A673 (cell line): ENCODE measurements at regions of chr5 and their contacts with region 1.

Region 1: DNA sequence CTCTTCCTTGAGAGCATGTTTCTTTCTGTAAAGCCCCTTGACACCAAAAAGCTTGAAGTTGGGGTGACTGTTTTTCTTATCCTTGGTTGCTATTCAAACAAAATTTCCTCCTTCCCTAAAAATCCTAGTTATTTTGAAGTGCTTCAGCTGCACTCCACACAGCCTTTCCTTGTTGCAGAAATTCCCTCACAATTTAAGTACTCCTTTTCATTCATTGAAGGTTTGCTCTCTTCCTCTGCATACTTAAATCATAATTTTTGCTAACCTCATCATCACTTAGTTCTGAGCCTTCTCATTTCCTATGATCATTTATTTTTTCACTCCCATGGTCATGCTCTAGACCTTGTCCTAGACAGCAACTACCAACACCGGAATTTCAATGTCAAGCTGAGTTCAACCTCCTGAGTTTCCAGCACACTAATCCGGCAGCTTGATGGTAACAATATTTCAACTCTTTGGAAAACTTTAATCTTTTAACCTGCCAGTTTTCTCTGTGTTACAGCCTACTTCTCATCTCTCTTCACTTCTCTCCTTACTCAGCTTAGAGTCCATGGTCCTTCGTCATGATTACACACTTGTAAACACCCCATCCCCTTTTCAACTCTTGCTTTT is 78.7 kb upstream of the ACTBL2 start:
- DNase-seq: no peak
- H3K4me3 ChIP-seq: no peak overlapping the region
- H3K27ac ChIP-seq: no peak overlapping the region
- H3K4me1 ChIP-seq: no peaks in the 10 kb centered on the region
- H3K27me3 ChIP-seq: peaks cover 19% of the 10 kb centered on the region
- CTCF ChIP-seq: no peak

Region 2: DNA sequence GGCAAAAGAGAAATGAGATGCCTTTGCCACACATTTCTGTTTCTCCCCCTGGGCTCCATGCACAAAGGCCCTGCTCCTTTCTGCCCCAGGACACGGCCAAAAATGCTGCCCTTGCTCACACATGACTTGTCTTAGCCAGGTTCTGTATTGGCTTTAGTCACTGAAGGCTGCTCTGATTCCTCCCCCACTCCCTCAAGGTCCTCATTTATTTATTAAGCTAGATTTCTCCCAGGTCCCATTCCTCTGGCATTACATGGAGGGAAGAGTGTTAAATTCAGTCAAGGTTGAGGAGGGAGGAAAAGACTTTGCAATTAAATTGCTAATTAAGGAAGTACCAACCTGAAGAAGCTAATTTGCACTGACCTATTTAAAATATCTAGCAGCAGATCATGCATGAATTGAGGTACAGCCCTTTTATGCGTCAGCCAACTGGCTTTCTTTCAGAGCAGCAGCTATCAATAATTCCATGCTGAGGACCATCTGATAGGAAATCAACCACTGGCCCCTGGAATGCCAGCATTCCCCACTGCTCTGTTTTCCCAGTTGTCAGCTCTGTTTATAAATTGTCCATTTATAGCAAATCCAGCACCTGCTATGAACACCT is 827.1 kb before region 1 on chr5:
- CTCF ChIA-PET with region 1: no interaction called
- POLR2A ChIA-PET with region 1: no interaction called
- intact Hi-C with region 1: no loop called
- DNase-seq: no peak
- H3K4me3 ChIP-seq: no peak overlapping the region
- H3K27ac ChIP-seq: no peak overlapping the region
- H3K4me1 ChIP-seq: no peaks in the 10 kb centered on the region
- H3K27me3 ChIP-seq: no peaks in the 10 kb centered on the region
- CTCF ChIP-seq: no peak

Region 3: DNA sequence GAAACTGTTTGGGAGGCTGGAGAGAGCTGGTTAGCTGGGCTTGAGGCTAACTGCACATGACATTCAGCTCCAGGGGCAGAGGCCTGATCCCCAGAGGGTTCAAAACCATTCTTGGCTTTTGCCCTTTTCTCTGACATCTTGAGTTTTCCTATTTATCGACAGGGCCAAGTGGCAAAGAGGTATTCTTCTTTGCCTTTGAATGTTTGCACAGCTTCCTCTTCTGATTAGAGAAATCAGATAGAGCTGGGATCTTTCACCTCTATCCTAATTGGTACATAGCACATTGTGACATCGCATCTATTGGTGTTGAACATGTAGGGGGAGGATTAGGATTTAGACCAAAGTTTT is 222.5 kb before region 1 on chr5:
- CTCF ChIA-PET with region 1: interaction called, 13 read pairs
- POLR2A ChIA-PET with region 1: no interaction called
- intact Hi-C with region 1: no loop called
- DNase-seq: no peak
- H3K4me3 ChIP-seq: no peak overlapping the region
- H3K27ac ChIP-seq: no peak overlapping the region
- H3K4me1 ChIP-seq: no peaks in the 10 kb centered on the region
- H3K27me3 ChIP-seq: no peaks in the 10 kb centered on the region
- CTCF ChIP-seq: no peak

Region 4: GRCh38 chr5:57450991-57451876 is 110.1 kb before region 1 on chr5:
- CTCF ChIA-PET with region 1: no interaction called
- POLR2A ChIA-PET with region 1: no interaction called
- intact Hi-C with region 1: no loop called
- DNase-seq: peak; percentile 93
- H3K4me3 ChIP-seq: no peak overlapping the region
- H3K27ac ChIP-seq: peak overlapping the region; percentile 69
- H3K4me1 ChIP-seq: peaks cover 35% of the 10 kb centered on the region
- H3K27me3 ChIP-seq: no peaks in the 10 kb centered on the region
- CTCF ChIP-seq: no peak